ENCODE measurements at regions of chr9 and their contacts with region 1.

Region 1: GRCh38 chr9:86918556-86918955 is 28.8 kb downstream of the GAS1 start:
- DNase-seq: no peak
- H3K4me3 ChIP-seq: no peak overlapping the region
- CTCF ChIP-seq: no peak
- POLR2A ChIP-seq: no peak

Region 2: DNA sequence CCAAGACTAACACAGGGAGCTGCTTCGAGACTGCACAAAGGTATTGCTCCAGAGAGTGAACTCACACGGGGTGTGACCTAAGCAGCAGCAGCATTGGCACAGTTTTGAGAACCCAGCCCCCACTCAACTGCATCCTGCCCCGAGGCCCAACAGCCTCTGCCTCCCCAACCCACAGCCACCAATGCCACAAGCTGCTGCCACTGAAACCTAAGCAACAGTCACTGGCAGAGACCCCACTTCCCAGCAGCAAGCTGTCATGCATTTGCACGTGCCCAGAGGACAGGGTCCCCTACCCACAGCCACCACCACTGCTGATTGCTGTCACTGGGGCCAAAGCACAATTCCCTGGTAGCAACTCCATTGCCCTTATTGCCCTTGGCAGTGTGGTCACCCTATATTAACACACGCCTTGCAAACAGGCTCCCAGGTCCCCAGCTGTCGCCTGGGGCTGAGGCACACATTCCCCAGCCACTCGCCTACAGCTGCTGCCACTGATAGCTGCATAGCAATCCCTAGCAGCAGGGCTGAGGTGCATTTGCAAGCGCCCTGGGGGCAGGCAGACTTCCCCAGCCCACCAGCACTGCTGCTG is 1317.8 kb before region 1 on chr9:
- intact Hi-C with region 1: no loop called
- DNase-seq: no peak
- H3K4me3 ChIP-seq: no peak overlapping the region
- CTCF ChIP-seq: no peak
- POLR2A ChIP-seq: no peak

Region 3: GRCh38 chr9:88041447-88041846 is 1122.9 kb after region 1 on chr9:
- intact Hi-C with region 1: loop called (anchors 10 kb)
- DNase-seq: no peak
- H3K4me3 ChIP-seq: no peak overlapping the region
- CTCF ChIP-seq: no peak
- POLR2A ChIP-seq: no peak

Measured in lower leg skin (tissue), 4 donors.